ENCODE measurements at regions of chr1 and their contacts with region 1.

Region 1: DNA sequence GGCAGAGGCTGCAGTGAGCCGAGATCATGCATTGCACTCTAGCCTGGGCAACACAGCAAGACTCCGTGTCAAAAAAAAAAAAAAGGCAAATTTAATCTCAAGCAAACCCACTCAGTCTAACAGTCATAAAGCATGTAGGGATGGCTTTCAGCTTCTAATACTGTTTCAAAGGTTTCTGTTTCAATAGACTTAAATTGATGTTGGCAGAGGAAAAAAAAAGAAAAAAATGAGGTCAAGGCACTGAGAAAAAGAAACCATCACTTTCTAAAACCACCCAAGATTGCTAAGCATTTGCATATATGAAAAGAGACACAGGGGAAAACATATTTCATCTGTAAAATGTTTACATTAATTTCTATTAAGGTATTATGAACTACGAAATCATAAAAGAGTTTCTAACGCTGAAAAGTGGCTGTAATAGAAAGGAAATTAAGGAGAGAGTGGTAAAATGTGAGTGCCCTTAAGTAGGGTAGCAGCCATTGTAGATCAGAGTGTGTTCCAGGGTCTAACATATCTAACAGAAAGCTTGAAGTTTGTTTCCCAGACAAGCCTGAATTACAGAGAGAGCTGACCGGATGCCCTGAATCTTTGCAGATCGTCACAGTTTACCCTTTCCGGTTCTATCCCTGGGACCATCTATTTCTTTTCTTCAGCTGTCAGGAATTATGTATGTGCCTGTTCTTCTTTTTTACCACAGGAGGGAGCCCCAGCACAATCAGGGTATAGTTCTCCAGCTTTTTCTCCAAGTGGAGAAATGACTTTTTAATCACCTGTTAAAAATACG is 70.0 kb downstream of the PLD5 start:
- DNase-seq: no peak
- ATAC-seq: no peak

Region 2: DNA sequence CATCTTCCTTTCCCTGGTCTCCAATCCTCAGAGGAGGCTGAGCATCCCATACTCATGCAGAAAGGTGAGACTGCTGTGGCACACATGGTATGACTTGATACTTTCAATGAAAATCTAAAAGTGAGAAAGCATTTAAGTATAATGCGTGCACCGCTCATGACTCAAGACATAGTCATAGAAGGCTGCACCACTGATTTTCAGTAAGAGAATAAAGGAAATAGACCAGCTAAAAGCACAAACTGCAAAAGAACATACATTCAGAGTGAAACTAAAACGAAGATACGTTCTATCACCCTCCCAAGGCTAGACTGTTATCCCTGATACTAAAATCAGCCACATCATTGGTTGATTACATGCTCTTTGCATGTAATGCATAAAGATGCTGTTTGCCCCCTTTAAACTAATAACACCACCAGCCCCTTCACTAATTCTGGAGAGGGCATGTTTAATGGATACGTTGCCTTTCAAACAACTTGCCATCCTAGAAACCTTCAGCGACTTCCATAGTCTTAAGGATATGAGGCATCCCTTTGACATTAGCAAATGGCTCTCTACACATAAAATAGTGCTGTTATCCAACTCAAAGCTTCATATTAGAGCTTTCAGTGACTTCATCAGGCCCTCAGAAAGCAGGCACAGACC is 68.0 kb after region 1 on chr1:
- intact Hi-C with region 1: no loop called
- DNase-seq: no peak
- ATAC-seq: no peak

Region 3: GRCh38 chr1:243325305-243325890 is 870.9 kb after region 1 on chr1:
- intact Hi-C with region 1: loop called in 1 of 2 experiments (anchors 10 kb)
- DNase-seq: no peak
- ATAC-seq: peak; percentile 52